Activated CD4-positive, alpha-beta T cell treated with anti-CD3 and anti-CD28 coated beads for 36 hours (primary cell): ENCODE measurements at regions of chr1 and their contacts with region 1.

Region 1: GRCh38 chr1:235317168-235317567 is 10.8 kb downstream of the ARID4B start:
- DNase-seq: no peak
- ATAC-seq: peak; percentile 75
- H3K4me3 Mint-ChIP-seq: no peak overlapping the region
- H3K27ac Mint-ChIP-seq: peak overlapping the region; percentile 84
- H3K4me1 Mint-ChIP-seq: peaks cover 76% of the 10 kb centered on the region
- H3K27me3 Mint-ChIP-seq: no peaks in the 10 kb centered on the region

Region 2: GRCh38 chr1:235304549-235305451 is 12.4 kb before region 1 on chr1:
- CTCF ChIA-PET with region 1: interaction called, 13 read pairs
- POLR2A ChIA-PET with region 1: interaction called, 5 read pairs
- intact Hi-C with region 1: no loop called
- DNase-seq: peak; percentile 33
- ATAC-seq: peak; percentile 76
- H3K4me3 Mint-ChIP-seq: peak overlapping the region; percentile 52
- H3K27ac Mint-ChIP-seq: peak overlapping the region; percentile 93
- H3K4me1 Mint-ChIP-seq: peaks cover 57% of the 10 kb centered on the region
- H3K27me3 Mint-ChIP-seq: no peaks in the 10 kb centered on the region